Ascending aorta (tissue), 2 donors: ENCODE measurements at regions of chr3 and their contacts with region 1.

Region 1: DNA sequence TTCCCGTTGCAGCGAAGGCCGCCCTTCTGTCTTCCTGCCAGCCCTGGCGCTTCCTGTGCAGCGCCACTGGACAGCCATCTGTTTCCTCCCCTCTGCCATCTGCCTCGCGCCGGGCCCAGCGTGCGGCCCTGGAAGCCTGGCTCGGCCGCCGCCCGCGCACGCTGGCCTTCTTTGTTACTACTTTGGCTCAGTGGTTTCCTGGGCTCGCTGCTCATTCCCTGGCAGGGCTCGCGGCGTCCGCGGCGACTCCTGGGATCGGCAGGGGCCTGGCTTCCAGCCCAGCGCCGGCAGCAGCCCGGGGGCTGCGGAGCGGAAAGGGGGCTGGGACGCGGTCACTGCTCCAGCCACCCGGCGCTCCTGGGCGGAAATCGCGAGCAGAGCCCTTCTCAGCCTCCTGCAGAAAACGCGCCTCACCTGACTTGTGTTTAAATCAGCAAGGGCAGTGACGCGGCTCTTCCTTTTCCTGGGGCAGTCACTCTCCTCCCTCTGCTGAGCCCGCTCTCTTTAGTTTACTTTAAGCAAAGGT is 10.0 kb downstream of the CMTM7 start:
- DNase-seq: peak in 1 of 2 donors; percentile 84
- H3K4me3 ChIP-seq: peak overlapping the region; percentile 45 to 61
- H3K27ac ChIP-seq: peak overlapping the region; percentile 74 to 76
- H3K4me1 ChIP-seq: peaks cover 0 to 5% of the 10 kb centered on the region in 2 donors
- H3K27me3 ChIP-seq: no peaks in the 10 kb centered on the region
- CTCF ChIP-seq: no peak

Region 2: GRCh38 chr3:32421991-32422859 is 20.6 kb after region 1 on chr3:
- intact Hi-C with region 1: loop called (anchors 2 kb)
- DNase-seq: peak; percentile 54 to 95
- H3K4me3 ChIP-seq: no peak overlapping the region
- H3K27ac ChIP-seq: peak overlapping the region; percentile 58 to 75
- H3K4me1 ChIP-seq: peaks cover 12 to 21% of the 10 kb centered on the region in 2 donors
- H3K27me3 ChIP-seq: no peaks in the 10 kb centered on the region
- CTCF ChIP-seq: no peak